Head of caudate nucleus (tissue), 42 donors: ENCODE measurements at regions of chr18 and their contacts with region 1.

Region 1: DNA sequence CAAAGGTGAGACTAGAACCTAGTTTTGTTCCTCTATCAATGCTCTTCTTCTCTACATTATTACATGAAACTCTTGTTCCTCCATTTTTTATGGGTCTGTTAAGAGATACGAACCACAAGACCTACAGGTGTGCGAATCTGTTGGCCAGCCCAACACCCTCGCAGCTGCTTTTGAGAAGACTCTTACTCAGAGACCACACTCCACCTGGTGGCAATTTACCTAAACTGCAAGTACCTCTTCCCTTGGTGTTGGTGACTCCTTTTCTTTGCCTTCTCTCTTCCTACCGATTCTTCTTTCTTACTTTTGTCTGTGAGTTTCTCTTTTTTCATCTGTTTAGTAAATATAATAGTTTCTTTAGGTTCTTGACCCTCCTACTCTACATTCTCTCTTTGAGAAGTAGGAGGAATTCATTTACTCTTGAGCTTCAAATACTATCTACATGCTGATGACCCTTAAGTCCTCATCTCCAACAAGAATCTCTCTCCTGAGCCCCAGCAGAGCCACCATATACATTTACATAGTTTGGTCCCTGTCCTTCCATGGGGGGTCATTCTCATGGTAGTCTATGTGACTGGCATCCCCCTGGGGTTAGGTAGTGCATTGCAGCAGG is 81.8 kb upstream of the GAREM1 start:
- DNase-seq: peak in 41 of 42 donors; percentile 10 to 89 (median 64)

Region 2: DNA sequence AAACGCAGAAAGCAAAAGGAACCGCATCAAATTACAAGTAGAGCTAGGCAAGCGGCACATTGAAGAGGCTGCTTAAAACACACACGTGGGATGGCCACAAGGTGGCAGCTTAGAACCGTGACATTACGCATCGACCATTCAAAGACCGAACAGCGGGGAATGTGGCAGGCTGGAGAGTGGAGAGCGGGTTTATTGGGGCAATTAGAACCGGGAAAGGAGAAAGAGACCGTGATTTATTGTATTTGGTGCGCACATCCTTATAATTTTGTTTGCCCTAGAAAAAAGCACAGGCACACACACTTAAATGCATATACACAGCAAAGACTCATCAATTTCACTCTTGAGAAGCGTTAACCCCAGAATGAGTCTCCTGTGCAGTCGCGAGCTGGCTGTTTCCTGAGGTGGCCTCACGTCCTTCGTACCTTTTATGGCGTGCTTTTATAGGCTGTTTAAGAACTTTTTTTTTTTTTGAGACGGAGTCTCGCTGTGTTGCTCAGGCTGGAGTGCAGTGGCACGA is 394.4 kb before region 1 on chr18:
- intact Hi-C with region 1: loop called (anchors 2 kb)
- DNase-seq: peak; percentile 66 to 93 (median 85)

Region 3: GRCh38 chr18:32271672-32272208 is 280.8 kb before region 1 on chr18:
- intact Hi-C with region 1: loop called (anchors 5 kb)
- DNase-seq: peak in 33 of 42 donors; percentile 15 to 76 (median 50)